Head of caudate nucleus (tissue), 42 donors: ENCODE measurements at regions of chr9 and their contacts with region 1.

Region 1: GRCh38 chr9:128927731-128928411 is 7.1 kb downstream of the PHYHD1 start:
- DNase-seq: peak in 41 of 42 donors; percentile 41 to 86 (median 66)

Region 2: GRCh38 chr9:128863647-128864046 is 64.2 kb before region 1 on chr9:
- intact Hi-C with region 1: loop called (anchors 5 kb)
- DNase-seq: peak in 41 of 42 donors; percentile 26 to 91 (median 72)

Region 3: GRCh38 chr9:128947422-128948301 is 19.8 kb after region 1 on chr9 and contains the starts of genes DOLK and NUP188:
- intact Hi-C with region 1: no loop called
- DNase-seq: peak; percentile 90 to 100 (median 98)